ENCODE measurements at regions of chr6 and their contacts with region 1.

Region 1: DNA sequence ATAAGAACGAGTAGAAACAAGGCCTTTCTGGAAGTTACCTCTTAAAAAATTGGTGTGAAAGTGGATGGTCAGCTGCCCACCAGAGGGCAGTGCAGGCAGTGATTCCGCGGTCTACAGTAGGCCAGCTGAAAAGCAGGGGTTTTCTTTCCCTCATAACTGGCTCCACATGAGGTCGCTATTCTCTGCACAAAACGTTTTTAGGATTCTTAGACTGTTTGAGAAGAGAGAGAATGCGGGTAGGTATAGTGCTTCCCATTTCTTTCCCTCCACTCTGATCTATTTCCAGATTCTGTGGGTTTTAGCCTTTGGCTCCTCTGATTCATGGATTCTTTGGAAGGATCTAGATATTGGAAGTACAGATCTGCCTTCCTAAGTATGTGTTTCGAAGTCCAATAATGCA is 14.2 kb downstream of the FIG4 start:
- DNase-seq: peak; percentile 74 to 90 (median 88)
- ATAC-seq: peak; percentile 94 to 95
- H3K4me3 ChIP-seq: no peak overlapping the region
- H3K27ac ChIP-seq: no peak overlapping the region
- H3K4me1 ChIP-seq: no peaks in the 10 kb centered on the region
- H3K27me3 ChIP-seq: no peaks in the 10 kb centered on the region

Region 2: DNA sequence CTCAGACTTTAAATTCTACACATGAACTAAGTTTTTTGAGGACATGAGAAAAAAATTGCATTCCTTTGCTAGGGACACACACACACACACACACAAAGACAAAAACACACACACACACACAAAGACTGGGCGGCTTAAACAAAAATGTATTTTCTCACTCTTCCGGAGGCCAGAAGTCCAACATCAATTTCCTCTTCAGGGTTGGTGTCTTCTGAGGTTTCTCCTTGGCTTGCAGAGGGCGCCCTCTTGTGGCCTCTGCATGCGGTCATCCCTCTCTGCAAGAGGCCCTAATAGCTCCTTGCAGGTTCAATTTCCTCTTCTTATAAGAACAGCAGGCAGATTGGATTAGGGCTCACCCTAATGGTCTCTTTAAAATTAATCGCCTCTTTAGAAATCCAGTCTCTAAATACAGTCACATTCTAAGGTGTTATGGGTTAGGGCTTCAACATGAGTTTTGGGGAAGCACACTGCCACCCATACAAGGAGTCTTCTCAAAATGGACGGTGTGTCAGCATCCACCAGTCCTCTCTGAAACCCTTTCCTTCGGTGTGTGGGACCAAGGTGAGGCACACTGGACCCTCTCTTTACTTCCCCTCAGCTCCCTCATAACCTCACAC is 334.2 kb after region 1 on chr6:
- intact Hi-C with region 1: loop called (anchors 1 to 5 kb)
- DNase-seq: peak; percentile 85 to 94 (median 94)
- ATAC-seq: peak; percentile 90 to 95
- H3K4me3 ChIP-seq: peak overlapping the region; percentile 36
- H3K27ac ChIP-seq: no peak overlapping the region
- H3K4me1 ChIP-seq: no peaks in the 10 kb centered on the region
- H3K27me3 ChIP-seq: no peaks in the 10 kb centered on the region

Region 3: GRCh38 chr6:110053395-110054240 is 348.4 kb after region 1 on chr6:
- intact Hi-C with region 1: loop called in 2 of 4 experiments (anchors 5 kb)
- DNase-seq: no peak
- ATAC-seq: peak; percentile 55 to 61
- H3K4me3 ChIP-seq: no peak overlapping the region
- H3K27ac ChIP-seq: no peak overlapping the region
- H3K4me1 ChIP-seq: no peaks in the 10 kb centered on the region
- H3K27me3 ChIP-seq: no peaks in the 10 kb centered on the region

Region 4: GRCh38 chr6:110389689-110390382 is 684.6 kb after region 1 on chr6:
- intact Hi-C with region 1: loop called in 2 of 4 experiments (anchors 10 kb)
- DNase-seq: no peak
- ATAC-seq: peak; percentile 15 to 42
- H3K4me3 ChIP-seq: no peak overlapping the region
- H3K27ac ChIP-seq: no peak overlapping the region
- H3K4me1 ChIP-seq: peaks cover 2% of the 10 kb centered on the region
- H3K27me3 ChIP-seq: no peaks in the 10 kb centered on the region

Region 5: GRCh38 chr6:110398778-110399177 is 693.5 kb after region 1 on chr6:
- intact Hi-C with region 1: loop called in 1 of 4 experiments (anchors 10 kb)
- DNase-seq: no peak
- ATAC-seq: peak in 1 of 2 donors; percentile 38
- H3K4me3 ChIP-seq: no peak overlapping the region
- H3K27ac ChIP-seq: no peak overlapping the region
- H3K4me1 ChIP-seq: peaks cover 2% of the 10 kb centered on the region
- H3K27me3 ChIP-seq: no peaks in the 10 kb centered on the region